Heart left ventricle (tissue), 16 donors: ENCODE measurements at regions of chr4 and their contacts with region 1.

Region 1: DNA sequence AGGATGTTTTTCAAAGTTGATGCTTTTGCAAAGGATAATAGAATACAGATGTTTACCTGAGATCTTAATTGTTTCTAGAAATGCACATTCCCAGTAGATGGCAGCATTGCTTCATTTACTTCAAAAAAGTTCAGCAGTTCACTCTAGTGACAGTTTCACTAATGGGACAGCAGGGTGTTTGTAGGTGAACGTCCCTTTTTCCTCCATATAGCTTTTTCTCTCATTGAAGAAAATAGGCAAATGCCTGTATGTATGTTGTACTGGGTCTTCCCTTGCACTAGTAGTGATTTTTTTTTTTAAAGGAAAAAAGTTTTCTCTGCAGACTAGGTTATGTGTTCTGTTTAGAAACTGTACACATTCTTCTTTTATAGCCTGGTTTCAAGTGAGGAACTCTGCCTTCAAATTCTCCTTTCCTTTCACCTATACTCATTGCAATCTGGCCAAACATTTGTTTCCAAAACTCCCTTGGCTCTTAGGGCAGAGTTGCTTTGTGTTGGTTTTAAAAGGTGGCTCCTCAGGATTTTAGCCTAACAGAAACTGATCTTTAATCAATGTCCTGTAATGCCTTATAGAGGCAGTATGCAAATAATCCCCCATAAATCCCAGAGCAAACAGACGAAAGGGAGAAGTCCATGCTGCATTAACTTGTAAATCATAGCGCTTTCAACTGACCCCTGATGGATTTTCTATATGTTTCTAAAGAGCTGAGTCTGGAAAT is 86.3 kb downstream of the EGF start:
- DNase-seq: peak in 1 of 5 donors; percentile 18
- ATAC-seq: peak in 3 of 4 donors; percentile 32 to 62 (median 36)
- H3K4me3 ChIP-seq: no peak overlapping the region
- H3K27ac ChIP-seq: no peak overlapping the region
- H3K4me1 ChIP-seq: peaks cover 0 to 8% (median 0%) of the 10 kb centered on the region in 12 donors
- H3K27me3 ChIP-seq: peaks cover 0 to 10% (median 0%) of the 10 kb centered on the region in 9 donors
- CTCF ChIP-seq: peak; percentile 50 to 73 (median 64)
- POLR2A ChIP-seq: no peak

Region 2: DNA sequence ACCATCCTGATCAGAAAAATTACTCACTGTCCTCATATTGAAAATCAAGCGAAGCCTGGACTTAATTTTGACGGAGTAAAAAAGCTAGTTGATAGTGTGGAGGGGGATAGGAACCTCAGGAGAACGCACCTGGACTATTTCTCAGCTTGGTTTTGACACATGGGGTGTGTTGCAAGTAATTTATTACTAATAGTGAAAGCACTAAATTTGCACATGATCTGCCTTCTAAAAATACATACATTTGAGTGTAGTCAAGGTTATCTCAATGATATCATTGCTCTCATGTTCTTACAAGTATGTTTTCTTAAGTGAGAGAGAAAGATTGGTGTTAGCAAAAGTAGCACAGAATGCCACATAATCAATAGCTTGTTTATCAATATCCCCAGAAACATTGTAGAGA is 121.6 kb before region 1 on chr4:
- intact Hi-C with region 1: no loop called
- DNase-seq: no peak
- ATAC-seq: no peak
- H3K4me3 ChIP-seq: no peak overlapping the region
- H3K27ac ChIP-seq: no peak overlapping the region
- H3K4me1 ChIP-seq: no peaks in the 10 kb centered on the region
- H3K27me3 ChIP-seq: no peaks in the 10 kb centered on the region
- CTCF ChIP-seq: no peak
- POLR2A ChIP-seq: no peak

Region 3: GRCh38 chr4:110310795-110311194 is 311.8 kb after region 1 on chr4:
- intact Hi-C with region 1: loop called in 3 of 10 experiments (anchors 5 to 10 kb)
- DNase-seq: no peak
- ATAC-seq: no peak
- H3K4me3 ChIP-seq: no peak overlapping the region
- H3K27ac ChIP-seq: no peak overlapping the region
- H3K4me1 ChIP-seq: peaks cover 0 to 10% (median 0%) of the 10 kb centered on the region in 12 donors
- H3K27me3 ChIP-seq: no peaks in the 10 kb centered on the region
- CTCF ChIP-seq: no peak
- POLR2A ChIP-seq: no peak

Region 4: GRCh38 chr4:111631215-111631999 is 1632.4 kb after region 1 on chr4:
- intact Hi-C with region 1: loop called in 1 of 10 experiments (anchors 10 kb)
- DNase-seq: no peak
- ATAC-seq: no peak
- H3K4me3 ChIP-seq: no peak overlapping the region
- H3K27ac ChIP-seq: no peak overlapping the region
- H3K4me1 ChIP-seq: no peaks in the 10 kb centered on the region
- H3K27me3 ChIP-seq: peaks cover 0 to 26% (median 0%) of the 10 kb centered on the region in 9 donors
- CTCF ChIP-seq: peak in 7 of 12 donors; percentile 6 to 36 (median 23)
- POLR2A ChIP-seq: no peak